Activated CD4-positive, alpha-beta T cell treated with anti-CD3 and anti-CD28 coated beads for 36 hours (primary cell): ENCODE measurements at regions of chr20 and their contacts with region 1.

Region 1: GRCh38 chr20:8895472-8895871 is 173.4 kb upstream of the PLCB4 start:
- DNase-seq: no peak
- ATAC-seq: no peak
- H3K4me3 Mint-ChIP-seq: no peak overlapping the region
- H3K27ac Mint-ChIP-seq: no peak overlapping the region
- H3K4me1 Mint-ChIP-seq: no peaks in the 10 kb centered on the region
- H3K27me3 Mint-ChIP-seq: no peaks in the 10 kb centered on the region

Region 2: GRCh38 chr20:8952721-8953120 is 57.2 kb after region 1 on chr20:
- CTCF ChIA-PET with region 1: no interaction called
- POLR2A ChIA-PET with region 1: no interaction called
- intact Hi-C with region 1: loop called in 1 of 2 experiments (anchors 10 kb)
- DNase-seq: no peak
- ATAC-seq: no peak
- H3K4me3 Mint-ChIP-seq: no peak overlapping the region
- H3K27ac Mint-ChIP-seq: no peak overlapping the region
- H3K4me1 Mint-ChIP-seq: no peaks in the 10 kb centered on the region
- H3K27me3 Mint-ChIP-seq: no peaks in the 10 kb centered on the region

Region 3: DNA sequence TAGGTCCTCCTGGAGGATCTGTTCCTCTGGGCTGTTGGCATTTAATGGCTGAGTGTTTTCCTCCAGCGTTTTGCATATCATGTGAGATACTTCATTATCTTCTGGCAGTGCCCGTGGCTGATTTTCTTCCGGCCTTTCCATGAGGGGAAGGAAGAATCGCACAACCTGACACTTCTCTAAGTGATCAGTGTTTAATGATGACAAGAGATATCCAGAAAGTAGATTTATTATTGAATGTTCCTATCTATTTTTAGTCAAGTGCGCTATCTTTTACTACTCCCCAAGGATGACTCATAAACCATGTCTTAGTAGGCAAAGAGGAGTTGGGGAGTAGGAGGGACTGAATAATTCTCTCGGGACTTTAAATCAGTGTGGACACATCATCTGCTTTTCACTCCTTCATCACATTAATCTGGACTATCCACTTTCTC is 323.1 kb after region 1 on chr20:
- CTCF ChIA-PET with region 1: no interaction called
- POLR2A ChIA-PET with region 1: no interaction called
- intact Hi-C with region 1: no loop called
- DNase-seq: no peak
- ATAC-seq: no peak
- H3K4me3 Mint-ChIP-seq: no peak overlapping the region
- H3K27ac Mint-ChIP-seq: no peak overlapping the region
- H3K4me1 Mint-ChIP-seq: no peaks in the 10 kb centered on the region
- H3K27me3 Mint-ChIP-seq: no peaks in the 10 kb centered on the region